Activated CD4-positive, alpha-beta T cell treated with anti-CD3 and anti-CD28 coated beads for 36 hours (primary cell): ENCODE measurements at regions of chr15 and their contacts with region 1.

Region 1: GRCh38 chr15:41557673-41558399 is 1.2 kb upstream of the TYRO3 start:
- DNase-seq: peak; percentile 85
- ATAC-seq: peak; percentile 75
- H3K4me3 Mint-ChIP-seq: peak overlapping the region; percentile 69
- H3K27ac Mint-ChIP-seq: peak overlapping the region; percentile 45
- H3K4me1 Mint-ChIP-seq: peaks cover 20% of the 10 kb centered on the region
- H3K27me3 Mint-ChIP-seq: peaks cover 10% of the 10 kb centered on the region

Region 2: DNA sequence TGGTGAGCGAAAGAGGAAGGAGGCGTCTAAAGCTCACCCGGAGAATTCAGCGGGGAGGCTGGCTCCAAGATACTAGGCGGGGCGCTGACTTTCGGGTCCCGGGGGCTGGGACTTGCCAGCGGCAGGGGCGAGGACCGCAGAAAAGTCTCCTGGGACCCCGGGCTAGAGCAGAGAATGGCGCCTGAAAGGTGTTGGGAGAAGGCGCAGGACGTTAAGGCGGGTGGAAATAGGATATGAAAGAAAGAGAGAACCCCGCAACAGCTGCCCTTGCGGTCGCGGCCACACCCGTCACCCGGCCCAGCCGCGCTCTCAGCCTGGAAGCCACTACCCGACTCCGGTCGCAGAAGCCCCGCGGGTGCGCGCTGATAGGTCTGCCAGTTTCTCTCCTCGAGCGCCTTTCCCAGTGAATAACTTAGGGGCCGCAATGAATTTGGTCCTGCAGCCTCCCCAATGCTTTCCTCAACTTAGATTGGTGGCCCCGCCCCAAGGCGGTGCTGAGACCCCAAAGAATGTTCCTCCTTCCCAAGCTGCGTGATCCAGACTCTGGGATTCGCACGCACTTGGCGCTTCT is 44.8 kb before region 1 on chr15:
- CTCF ChIA-PET with region 1: no interaction called
- POLR2A ChIA-PET with region 1: no interaction called
- intact Hi-C with region 1: loop called in 1 of 2 experiments (anchors 2 kb)
- DNase-seq: peak; percentile 52
- ATAC-seq: no peak
- H3K4me3 Mint-ChIP-seq: peak overlapping the region; percentile 52
- H3K27ac Mint-ChIP-seq: no peak overlapping the region
- H3K4me1 Mint-ChIP-seq: peaks cover 22% of the 10 kb centered on the region
- H3K27me3 Mint-ChIP-seq: peaks cover 30% of the 10 kb centered on the region

Region 3: DNA sequence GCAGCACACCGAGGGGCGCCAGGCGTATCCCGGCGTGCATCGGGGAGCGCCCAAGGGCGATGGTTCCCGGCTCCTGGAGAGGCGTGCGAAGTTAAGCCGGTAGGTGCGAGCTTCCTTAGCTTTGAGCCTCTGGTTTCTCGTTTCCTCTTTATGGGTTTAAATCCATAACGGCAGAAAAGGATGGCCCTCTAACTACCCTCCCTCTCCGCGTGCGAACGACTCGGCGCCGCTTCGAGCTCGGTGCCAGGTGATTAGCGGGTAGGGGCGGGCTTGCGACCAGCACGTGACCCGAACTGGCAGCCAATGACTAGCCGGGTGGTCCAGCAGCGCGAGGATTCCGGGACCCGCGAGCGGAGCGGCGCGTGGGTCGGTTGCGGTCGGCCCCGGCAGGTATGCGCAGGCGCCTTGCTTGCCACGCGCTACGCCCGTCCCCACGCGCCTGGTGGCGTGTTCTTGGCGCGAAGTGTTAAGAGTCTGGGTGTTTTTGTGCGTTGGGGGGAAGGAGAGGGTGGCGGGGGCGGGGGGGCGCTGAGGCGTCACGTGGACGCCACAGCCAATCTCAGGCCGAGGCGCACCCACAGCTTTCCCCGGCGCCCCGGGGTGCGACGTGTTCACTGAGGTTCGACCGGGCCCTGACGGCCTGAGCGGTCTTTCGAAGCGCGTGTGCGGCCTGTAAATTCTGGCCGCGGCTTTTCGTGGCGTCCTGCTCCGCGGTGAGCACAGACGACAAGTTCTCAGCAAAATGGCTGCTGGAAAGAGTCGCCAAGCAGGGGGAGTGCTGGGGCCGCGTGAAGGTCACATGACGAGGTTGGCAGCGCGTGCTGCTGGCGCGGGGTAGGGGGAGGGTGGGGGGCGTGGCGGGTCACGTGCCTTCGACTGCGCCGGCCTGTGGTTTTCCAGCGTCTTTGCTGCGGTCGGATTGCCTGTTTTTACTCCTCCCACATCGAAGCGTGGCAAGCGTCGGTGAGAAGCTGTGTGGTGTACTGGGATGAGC is 63.7 kb after region 1 on chr15:
- CTCF ChIA-PET with region 1: interaction called, 3 read pairs
- POLR2A ChIA-PET with region 1: no interaction called
- intact Hi-C with region 1: loop called in 1 of 2 experiments (anchors 2 kb)
- DNase-seq: peak; percentile 91
- ATAC-seq: peak; percentile 90
- H3K4me3 Mint-ChIP-seq: peak overlapping the region; percentile 70
- H3K27ac Mint-ChIP-seq: peak overlapping the region; percentile 76
- H3K4me1 Mint-ChIP-seq: peaks cover 11% of the 10 kb centered on the region
- H3K27me3 Mint-ChIP-seq: no peaks in the 10 kb centered on the region

Region 4: DNA sequence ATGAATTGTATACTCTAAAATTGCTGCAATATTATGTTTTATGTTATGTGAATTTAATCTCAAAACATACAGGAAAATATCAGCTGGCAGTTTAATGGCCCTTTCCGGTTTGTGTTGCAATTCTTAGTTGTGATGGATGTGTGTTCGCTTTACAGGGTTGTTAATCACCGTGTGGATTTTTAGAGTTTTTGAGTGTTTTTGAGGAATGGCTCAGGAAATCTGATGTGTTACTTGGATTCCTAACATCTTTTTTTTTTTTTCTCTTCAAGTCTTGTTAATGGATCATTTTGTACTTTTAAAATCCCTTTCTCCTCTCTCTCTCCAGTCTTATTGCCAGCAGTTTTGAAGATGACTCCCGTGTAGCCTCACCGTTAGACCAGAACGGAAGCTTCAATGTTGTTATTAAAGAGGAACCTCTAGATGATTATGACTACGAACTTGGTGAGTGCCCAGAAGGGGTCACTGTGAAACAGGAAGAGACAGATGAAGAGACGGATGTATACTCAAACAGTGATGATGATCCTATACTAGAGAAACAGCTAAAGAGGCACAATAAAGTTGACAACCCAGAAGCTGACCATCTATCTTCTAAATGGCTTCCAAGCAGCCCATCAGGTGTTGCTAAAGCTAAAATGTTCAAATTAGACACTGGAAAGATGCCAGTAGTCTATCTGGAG is 138.1 kb after region 1 on chr15:
- CTCF ChIA-PET with region 1: interaction called, 3 read pairs
- POLR2A ChIA-PET with region 1: no interaction called
- intact Hi-C with region 1: loop called in 1 of 2 experiments (anchors 2 kb)
- DNase-seq: peak; percentile 66
- ATAC-seq: peak; percentile 93
- H3K4me3 Mint-ChIP-seq: peak overlapping the region; percentile 2
- H3K27ac Mint-ChIP-seq: peak overlapping the region; percentile 78
- H3K4me1 Mint-ChIP-seq: peaks cover 43% of the 10 kb centered on the region
- H3K27me3 Mint-ChIP-seq: no peaks in the 10 kb centered on the region

Region 5: GRCh38 chr15:41827880-41828806 is 270.3 kb after region 1 on chr15 and contains the start of gene JMJD7:
- CTCF ChIA-PET with region 1: no interaction called
- POLR2A ChIA-PET with region 1: no interaction called
- intact Hi-C with region 1: loop called in 1 of 2 experiments (anchors 1 kb)
- DNase-seq: peak; percentile 99
- ATAC-seq: peak; percentile 96
- H3K4me3 Mint-ChIP-seq: peak within 1 kb of the TSS; percentile 80
- H3K27ac Mint-ChIP-seq: peak within 1 kb of the TSS; percentile 69
- H3K4me1 Mint-ChIP-seq: peaks cover 41% of the 10 kb centered on the region
- H3K27me3 Mint-ChIP-seq: no peaks in the 10 kb centered on the region
- total RNA-seq, gene JMJD7: 17.1 to 17.6 TPM

Region 6: DNA sequence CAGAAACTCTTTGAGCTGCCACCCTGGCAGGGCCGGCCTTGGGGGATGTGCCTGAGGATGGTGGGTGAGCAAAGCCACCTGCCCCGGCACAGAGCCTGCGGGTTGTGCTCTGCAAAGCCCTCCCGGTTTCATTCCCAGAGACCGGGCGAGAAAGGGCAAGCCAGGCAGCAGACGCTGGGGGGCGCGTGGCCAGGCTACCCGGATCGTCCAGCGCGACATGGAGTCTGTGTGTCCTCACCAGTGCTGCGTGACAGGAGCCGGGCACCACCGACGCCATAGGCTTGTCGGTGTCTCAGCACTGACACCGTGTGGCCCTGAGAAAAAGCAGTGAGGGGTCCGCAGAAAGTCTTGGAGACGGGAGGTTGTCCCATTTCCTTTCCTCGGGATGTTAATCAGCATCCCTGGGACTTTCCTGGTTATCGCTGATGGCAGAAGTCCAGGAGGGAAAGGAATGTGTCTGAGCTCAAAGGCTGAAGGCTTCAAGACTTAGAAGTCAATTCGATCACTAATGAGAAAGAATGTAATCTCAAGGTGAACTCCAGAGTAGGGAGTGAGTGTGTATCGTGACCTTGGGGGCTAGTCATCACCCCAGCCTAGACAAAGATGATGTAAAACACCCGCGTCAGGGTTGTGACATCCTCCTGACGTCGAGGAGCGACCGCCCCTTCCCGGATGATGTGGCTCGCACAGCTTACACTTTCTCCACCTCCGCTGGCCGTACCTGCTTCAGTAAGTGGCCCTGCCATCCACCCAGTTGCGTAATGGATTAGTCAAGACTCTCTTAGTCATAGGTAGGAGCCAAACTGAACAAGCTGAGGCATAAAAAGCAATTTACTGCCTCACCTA is 499.3 kb after region 1 on chr15:
- CTCF ChIA-PET with region 1: no interaction called
- POLR2A ChIA-PET with region 1: no interaction called
- intact Hi-C with region 1: loop called in 1 of 2 experiments (anchors 5 kb)
- DNase-seq: peak; percentile 83
- ATAC-seq: peak; percentile 86
- H3K4me3 Mint-ChIP-seq: peak overlapping the region; percentile 49
- H3K27ac Mint-ChIP-seq: peak overlapping the region; percentile 52
- H3K4me1 Mint-ChIP-seq: peaks cover 7% of the 10 kb centered on the region
- H3K27me3 Mint-ChIP-seq: peaks cover 9% of the 10 kb centered on the region